ENCODE measurements at regions of chr1 and their contacts with region 1.

Region 1: GRCh38 chr1:23098463-23099170 is 70.0 kb downstream of the LUZP1 start:
- DNase-seq: peak; percentile 24
- H3K4me3 ChIP-seq: no peak overlapping the region
- H3K27ac ChIP-seq: peak overlapping the region; percentile 37
- H3K4me1 ChIP-seq: peaks cover 54% of the 10 kb centered on the region
- H3K27me3 ChIP-seq: no peaks in the 10 kb centered on the region
- CTCF ChIP-seq: peak; percentile 96

Region 2: GRCh38 chr1:22952694-22953391 is 145.8 kb before region 1 on chr1:
- intact Hi-C with region 1: no loop called
- DNase-seq: no peak
- H3K4me3 ChIP-seq: peak overlapping the region; percentile 43
- H3K27ac ChIP-seq: no peak overlapping the region
- H3K4me1 ChIP-seq: no peaks in the 10 kb centered on the region
- H3K27me3 ChIP-seq: peaks cover 85% of the 10 kb centered on the region
- CTCF ChIP-seq: no peak

Region 3: DNA sequence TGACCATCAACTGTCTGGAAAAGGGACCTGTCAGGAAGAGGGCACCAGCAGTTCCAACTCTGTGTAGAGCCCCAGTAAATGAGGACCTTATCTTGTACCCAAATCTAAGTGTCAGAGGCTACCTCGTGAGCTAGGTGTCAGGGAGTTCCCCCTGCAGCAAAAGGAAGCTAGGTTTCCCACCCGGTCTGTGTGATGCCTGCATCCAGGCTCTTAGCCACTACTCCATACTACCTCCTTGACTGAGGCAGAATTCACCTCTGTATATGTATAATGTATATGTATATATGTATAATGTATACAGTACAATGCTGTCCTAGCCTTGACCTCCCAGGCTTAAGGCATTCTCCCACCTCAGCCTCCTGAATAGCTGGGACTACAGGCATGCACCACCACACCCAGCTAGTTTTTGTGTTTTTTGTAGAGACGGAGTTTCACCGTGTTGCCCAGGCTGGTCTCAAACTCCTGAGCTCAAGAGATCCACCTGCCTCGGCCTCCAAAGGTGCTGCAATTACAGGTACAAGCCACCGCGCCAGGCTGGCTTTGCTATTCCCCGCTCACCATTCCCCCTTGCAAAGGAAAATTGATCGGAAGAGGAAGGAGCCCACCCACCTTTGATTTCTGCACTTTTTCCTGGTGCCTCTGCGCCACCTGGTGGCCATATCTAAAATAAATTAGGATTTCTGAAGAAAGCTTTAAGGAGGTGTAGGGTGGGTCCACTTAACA is 85.8 kb after region 1 on chr1:
- intact Hi-C with region 1: loop called (anchors 2 kb)
- DNase-seq: no peak
- H3K4me3 ChIP-seq: peak overlapping the region; percentile 57
- H3K27ac ChIP-seq: no peak overlapping the region
- H3K4me1 ChIP-seq: peaks cover 7% of the 10 kb centered on the region
- H3K27me3 ChIP-seq: no peaks in the 10 kb centered on the region
- CTCF ChIP-seq: peak; percentile 78

Region 4: GRCh38 chr1:23559136-23559984 is 460.7 kb after region 1 on chr1 and contains the start of gene ID3:
- intact Hi-C with region 1: no loop called
- DNase-seq: peak; percentile 98
- H3K4me3 ChIP-seq: peak within 1 kb of the TSS; percentile 87
- H3K27ac ChIP-seq: peak within 1 kb of the TSS; percentile 96
- H3K4me1 ChIP-seq: peaks cover 91% of the 10 kb centered on the region
- H3K27me3 ChIP-seq: no peaks in the 10 kb centered on the region
- CTCF ChIP-seq: no peak
- total RNA-seq, gene ID3: 75.2 TPM

Measured in left ventricle myocardium inferior (tissue), 1 donor.